ENCODE measurements at regions of chr5 and their contacts with region 1.

Region 1: GRCh38 chr5:5658226-5658625 is 235.7 kb downstream of the ICE1 start:
- DNase-seq: peak; percentile 50 to 92
- H3K4me3 ChIP-seq: peak overlapping the region; percentile 51 to 58
- H3K27ac ChIP-seq: peak overlapping the region; percentile 71 to 76
- H3K4me1 ChIP-seq: no peaks in the 10 kb centered on the region
- H3K27me3 ChIP-seq: no peaks in the 10 kb centered on the region
- CTCF ChIP-seq: no peak

Region 2: GRCh38 chr5:5037674-5038073 is 620.6 kb before region 1 on chr5:
- intact Hi-C with region 1: no loop called
- DNase-seq: no peak
- H3K4me3 ChIP-seq: no peak overlapping the region
- H3K27ac ChIP-seq: no peak overlapping the region
- H3K4me1 ChIP-seq: no peaks in the 10 kb centered on the region
- H3K27me3 ChIP-seq: no peaks in the 10 kb centered on the region
- CTCF ChIP-seq: no peak

Region 3: DNA sequence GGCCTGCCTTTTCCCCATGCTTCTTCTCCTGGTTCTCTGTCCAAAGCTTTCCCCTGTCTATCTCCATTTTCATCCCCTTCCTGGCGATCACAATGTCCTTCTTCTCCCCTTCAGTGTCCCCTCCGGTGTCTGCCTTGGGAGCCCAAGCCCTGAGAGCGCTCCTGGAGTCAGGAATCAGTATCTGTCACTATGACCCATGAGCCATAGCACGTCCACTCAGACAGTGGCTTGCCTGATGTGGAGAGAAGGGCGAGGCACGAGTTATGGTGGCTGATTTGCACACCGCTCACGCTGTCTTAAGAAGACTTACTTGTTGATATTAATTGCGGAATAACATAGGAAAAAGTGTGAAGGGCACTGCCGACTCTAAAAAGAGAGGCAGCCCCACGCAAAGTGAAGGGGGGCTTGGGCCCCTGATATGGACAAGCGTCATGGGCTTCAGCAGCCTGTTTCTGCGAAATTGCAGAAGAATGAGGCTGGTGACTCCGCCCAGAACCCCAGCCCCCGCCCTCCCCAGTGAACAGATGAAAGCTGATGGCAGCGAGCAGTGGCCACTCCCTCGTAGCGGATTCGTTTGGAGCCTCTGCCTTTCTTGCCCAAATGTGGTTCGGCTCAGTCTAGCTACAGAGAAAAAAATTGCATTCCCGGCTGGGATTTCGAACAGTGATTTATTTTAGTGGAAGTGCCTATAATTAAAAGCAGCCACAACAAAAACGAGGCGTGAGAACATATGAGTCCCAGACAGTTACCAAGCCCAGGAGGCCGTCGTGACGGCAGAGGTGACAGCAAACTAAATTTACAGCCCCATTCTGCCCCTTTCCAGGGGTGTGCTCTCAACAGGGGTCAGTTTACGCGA is 86.0 kb before region 1 on chr5:
- intact Hi-C with region 1: loop called (anchors 2 kb)
- DNase-seq: peak; percentile 51 to 91
- H3K4me3 ChIP-seq: peak overlapping the region; percentile 1 to 49
- H3K27ac ChIP-seq: peak overlapping the region; percentile 81 to 84
- H3K4me1 ChIP-seq: peaks cover 8 to 24% of the 10 kb centered on the region in 2 donors
- H3K27me3 ChIP-seq: no peaks in the 10 kb centered on the region
- CTCF ChIP-seq: no peak

Region 4: GRCh38 chr5:5644249-5644648 is 14.0 kb before region 1 on chr5:
- intact Hi-C with region 1: loop called (anchors 2 kb)
- DNase-seq: no peak
- H3K4me3 ChIP-seq: no peak overlapping the region
- H3K27ac ChIP-seq: peak overlapping the region in 1 of 2 donors; percentile 14
- H3K4me1 ChIP-seq: peaks cover 0 to 6% of the 10 kb centered on the region in 2 donors
- H3K27me3 ChIP-seq: no peaks in the 10 kb centered on the region
- CTCF ChIP-seq: no peak

Region 5: GRCh38 chr5:6448622-6449464 is 790.6 kb after region 1 on chr5 and contains the start of gene UBE2QL1:
- intact Hi-C with region 1: loop called (anchors 10 kb)
- DNase-seq: no peak
- H3K4me3 ChIP-seq: peak within 1 kb of the TSS; percentile 67 to 72
- H3K27ac ChIP-seq: peak within 1 kb of the TSS in 1 of 2 donors; percentile 40
- H3K4me1 ChIP-seq: peaks cover 0 to 14% of the 10 kb centered on the region in 2 donors
- H3K27me3 ChIP-seq: no peaks in the 10 kb centered on the region
- CTCF ChIP-seq: no peak
- total RNA-seq, gene UBE2QL1: 0.85 TPM

Region 6: GRCh38 chr5:6704361-6704851 is 1046.2 kb after region 1 on chr5:
- intact Hi-C with region 1: loop called (anchors 10 kb)
- DNase-seq: peak; percentile 53 to 94
- H3K4me3 ChIP-seq: peak overlapping the region in 1 of 2 donors; percentile 12
- H3K27ac ChIP-seq: peak overlapping the region; percentile 88 to 89
- H3K4me1 ChIP-seq: peaks cover 14 to 29% of the 10 kb centered on the region in 2 donors
- H3K27me3 ChIP-seq: no peaks in the 10 kb centered on the region
- CTCF ChIP-seq: no peak